Right ventricle myocardium superior (tissue), 1 donor: ENCODE measurements at regions of chr17 and their contacts with region 1.

Region 1: GRCh38 chr17:31842183-31843069 is 16.6 kb downstream of the COPRS start:
- DNase-seq: peak; percentile 73
- ATAC-seq: peak; percentile 95

Region 2: GRCh38 chr17:31437720-31438420 is 404.6 kb before region 1 on chr17:
- intact Hi-C with region 1: loop called (anchors 5 kb)
- DNase-seq: no peak
- ATAC-seq: peak; percentile 9

Region 3: GRCh38 chr17:31558748-31559644 is 283.4 kb before region 1 on chr17:
- intact Hi-C with region 1: loop called (anchors 1 kb)
- DNase-seq: peak; percentile 87
- ATAC-seq: peak; percentile 93

Region 4: GRCh38 chr17:31696184-31696602 is 146.2 kb before region 1 on chr17:
- intact Hi-C with region 1: loop called (anchors 5 kb)
- DNase-seq: peak; percentile 91
- ATAC-seq: peak; percentile 92